Colonic mucosa (tissue), 4 donors: ENCODE measurements at regions of chr3 and their contacts with region 1.

Region 1: DNA sequence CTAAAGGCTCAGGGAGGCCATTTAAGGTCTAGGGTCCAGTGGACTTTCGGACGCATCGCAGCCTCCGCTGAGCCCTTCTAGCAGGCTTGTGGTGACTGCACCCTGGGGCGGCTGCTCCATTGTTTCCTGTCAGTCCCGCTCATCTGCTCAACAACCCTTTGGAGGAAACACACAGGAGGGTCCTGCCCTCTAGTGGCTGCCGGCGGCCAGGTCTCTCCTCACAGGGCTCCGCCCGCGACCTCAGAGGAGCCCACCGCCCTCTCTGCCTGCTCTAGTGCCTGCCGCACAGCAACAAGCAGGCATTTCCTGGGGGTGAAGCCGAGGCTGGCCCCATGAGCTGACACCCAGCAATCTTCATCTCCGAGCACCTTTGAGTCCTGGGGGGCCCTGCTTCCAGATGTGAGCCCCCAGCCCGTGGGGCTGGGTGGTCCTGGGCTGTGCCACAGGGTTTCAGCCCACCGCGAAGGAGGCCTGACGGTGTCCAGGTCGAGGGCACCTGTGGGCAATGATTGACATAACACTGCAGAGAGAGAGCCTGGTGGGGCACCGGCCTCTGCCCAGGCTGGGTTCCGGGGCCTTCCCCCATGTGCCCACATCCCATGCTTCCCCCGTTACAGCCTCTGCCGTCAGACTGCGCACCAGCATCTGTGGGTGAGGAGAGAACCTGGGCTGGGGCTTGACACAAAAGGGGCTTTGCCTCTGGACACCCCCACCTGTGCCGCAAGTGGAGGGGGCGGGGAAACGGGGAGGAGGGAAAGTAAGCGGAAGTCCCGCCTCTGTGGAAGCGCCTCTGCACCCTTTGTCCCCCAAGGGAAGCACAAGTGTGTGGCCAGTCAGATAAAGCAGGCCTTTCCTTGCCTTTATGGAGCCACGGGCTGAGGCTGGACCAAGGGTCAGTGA is 27.0 kb upstream of the SFMBT1 start:
- DNase-seq: peak; percentile 93
- H3K4me3 ChIP-seq: peak overlapping the region; percentile 80
- H3K27ac ChIP-seq: peak overlapping the region; percentile 50
- H3K4me1 ChIP-seq: peaks cover 4% of the 10 kb centered on the region
- H3K27me3 ChIP-seq: no peaks in the 10 kb centered on the region
- CTCF ChIP-seq: peak; percentile 92

Region 2: DNA sequence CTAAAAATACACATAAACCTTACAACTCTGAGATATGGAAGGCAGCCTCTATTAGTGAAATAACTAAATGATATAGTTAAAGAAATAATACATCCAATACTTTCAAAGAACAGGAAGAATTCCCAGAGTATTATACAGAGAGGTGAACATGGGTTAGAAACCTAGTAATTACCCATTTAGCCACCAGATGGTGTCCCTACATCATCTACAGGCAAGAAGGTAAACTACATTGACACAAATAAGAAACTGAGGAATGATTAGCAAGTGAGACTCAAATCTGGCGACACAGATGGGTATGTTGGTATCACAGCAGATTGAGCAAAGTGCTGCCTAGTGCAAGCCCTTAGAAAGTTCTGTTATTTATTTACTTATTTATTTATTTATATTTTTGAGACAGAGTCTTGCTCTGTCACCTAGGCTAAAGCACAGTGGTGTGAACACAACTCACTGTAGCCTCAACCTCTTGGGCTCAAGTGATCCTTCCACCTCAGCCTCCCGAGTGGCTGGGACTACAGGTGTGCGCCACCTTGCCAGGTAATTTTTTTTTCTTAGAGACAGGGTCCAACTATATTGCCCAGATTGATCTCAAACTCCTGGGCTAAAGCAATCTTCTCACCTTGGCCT is 330.4 kb before region 1 on chr3:
- intact Hi-C with region 1: loop called (anchors 10 kb)
- DNase-seq: no peak
- H3K4me3 ChIP-seq: no peak overlapping the region
- H3K27ac ChIP-seq: no peak overlapping the region
- H3K4me1 ChIP-seq: no peaks in the 10 kb centered on the region
- H3K27me3 ChIP-seq: no peaks in the 10 kb centered on the region
- CTCF ChIP-seq: peak; percentile 34